ENCODE measurements at regions of chr14 and their contacts with region 1.

Region 1: GRCh38 chr14:32076278-32077080 is 625 bp upstream of the ARHGAP5 start:
- DNase-seq: peak; percentile 90
- H3K4me3 Mint-ChIP-seq: peak overlapping the region; percentile 94
- H3K27ac Mint-ChIP-seq: peak overlapping the region; percentile 85
- H3K4me1 Mint-ChIP-seq: peaks cover 26% of the 10 kb centered on the region
- H3K27me3 Mint-ChIP-seq: peaks cover 2% of the 10 kb centered on the region

Region 2: GRCh38 chr14:30558675-30559555 is 1517.6 kb before region 1 on chr14 and contains the start of gene G2E3:
- CTCF ChIA-PET with region 1: no interaction called
- POLR2A ChIA-PET with region 1: no interaction called
- intact Hi-C with region 1: loop called (anchors 5 kb)
- DNase-seq: peak; percentile 93
- H3K4me3 Mint-ChIP-seq: peak within 1 kb of the TSS; percentile 100
- H3K27ac Mint-ChIP-seq: peak within 1 kb of the TSS; percentile 99
- H3K4me1 Mint-ChIP-seq: peaks cover 29% of the 10 kb centered on the region
- H3K27me3 Mint-ChIP-seq: peaks cover 3% of the 10 kb centered on the region
- total RNA-seq, gene G2E3: 25.3 to 31.2 TPM

Region 3: GRCh38 chr14:31207755-31208545 is 868.5 kb before region 1 on chr14 and contains the start of gene HECTD1:
- CTCF ChIA-PET with region 1: interaction called, 3 read pairs
- POLR2A ChIA-PET with region 1: interaction called, 5 read pairs
- intact Hi-C with region 1: loop called (anchors 5 kb)
- DNase-seq: peak; percentile 91
- H3K4me3 Mint-ChIP-seq: peak within 1 kb of the TSS; percentile 94
- H3K27ac Mint-ChIP-seq: peak within 1 kb of the TSS; percentile 100
- H3K4me1 Mint-ChIP-seq: peaks cover 48% of the 10 kb centered on the region
- H3K27me3 Mint-ChIP-seq: no peaks in the 10 kb centered on the region
- total RNA-seq, gene HECTD1: 84.9 to 88.1 TPM

Region 4: GRCh38 chr14:31561155-31561846 is 515.2 kb before region 1 on chr14 and contains the start of gene NUBPL:
- CTCF ChIA-PET with region 1: interaction called, 3 read pairs
- POLR2A ChIA-PET with region 1: no interaction called
- intact Hi-C with region 1: loop called (anchors 5 kb)
- DNase-seq: peak; percentile 98
- H3K4me3 Mint-ChIP-seq: peak within 1 kb of the TSS; percentile 95
- H3K27ac Mint-ChIP-seq: peak within 1 kb of the TSS; percentile 93
- H3K4me1 Mint-ChIP-seq: peaks cover 20% of the 10 kb centered on the region
- H3K27me3 Mint-ChIP-seq: peaks cover 1% of the 10 kb centered on the region
- total RNA-seq, gene NUBPL: 6.9 to 9.1 TPM

Region 5: DNA sequence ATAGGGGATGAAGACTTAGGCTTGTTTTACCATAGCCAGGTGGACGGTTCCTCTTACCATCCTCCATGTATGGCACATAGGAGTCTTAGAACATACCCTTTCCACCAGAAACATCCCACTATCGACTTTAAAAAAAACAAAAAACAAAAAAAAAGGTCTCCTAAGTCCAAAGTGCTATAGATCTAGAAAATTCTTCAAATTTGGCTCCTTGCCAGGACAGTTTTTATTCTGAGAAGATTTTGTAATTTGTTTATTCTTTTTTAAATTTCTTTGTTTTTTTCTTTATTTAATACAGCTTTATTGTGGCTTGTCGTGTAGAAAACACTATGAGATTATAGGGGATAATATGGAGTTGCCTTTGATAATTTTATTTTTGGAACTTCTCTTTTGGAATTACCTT is 317.5 kb before region 1 on chr14:
- CTCF ChIA-PET with region 1: no interaction called
- POLR2A ChIA-PET with region 1: no interaction called
- intact Hi-C with region 1: no loop called
- DNase-seq: no peak
- H3K4me3 Mint-ChIP-seq: no peak overlapping the region
- H3K27ac Mint-ChIP-seq: no peak overlapping the region
- H3K4me1 Mint-ChIP-seq: no peaks in the 10 kb centered on the region
- H3K27me3 Mint-ChIP-seq: no peaks in the 10 kb centered on the region

Region 6: GRCh38 chr14:31950764-31951637 is 125.5 kb before region 1 on chr14:
- CTCF ChIA-PET with region 1: no interaction called
- POLR2A ChIA-PET with region 1: no interaction called
- intact Hi-C with region 1: no loop called
- DNase-seq: no peak
- H3K4me3 Mint-ChIP-seq: no peak overlapping the region
- H3K27ac Mint-ChIP-seq: no peak overlapping the region
- H3K4me1 Mint-ChIP-seq: peaks cover 40% of the 10 kb centered on the region
- H3K27me3 Mint-ChIP-seq: no peaks in the 10 kb centered on the region

Region 7: GRCh38 chr14:32087173-32087861 is 10.8 kb after region 1 on chr14:
- CTCF ChIA-PET with region 1: no interaction called
- POLR2A ChIA-PET with region 1: no interaction called
- intact Hi-C with region 1: loop called (anchors 1 kb)
- DNase-seq: no peak
- H3K4me3 Mint-ChIP-seq: no peak overlapping the region
- H3K27ac Mint-ChIP-seq: no peak overlapping the region
- H3K4me1 Mint-ChIP-seq: peaks cover 43% of the 10 kb centered on the region
- H3K27me3 Mint-ChIP-seq: no peaks in the 10 kb centered on the region

Region 8: DNA sequence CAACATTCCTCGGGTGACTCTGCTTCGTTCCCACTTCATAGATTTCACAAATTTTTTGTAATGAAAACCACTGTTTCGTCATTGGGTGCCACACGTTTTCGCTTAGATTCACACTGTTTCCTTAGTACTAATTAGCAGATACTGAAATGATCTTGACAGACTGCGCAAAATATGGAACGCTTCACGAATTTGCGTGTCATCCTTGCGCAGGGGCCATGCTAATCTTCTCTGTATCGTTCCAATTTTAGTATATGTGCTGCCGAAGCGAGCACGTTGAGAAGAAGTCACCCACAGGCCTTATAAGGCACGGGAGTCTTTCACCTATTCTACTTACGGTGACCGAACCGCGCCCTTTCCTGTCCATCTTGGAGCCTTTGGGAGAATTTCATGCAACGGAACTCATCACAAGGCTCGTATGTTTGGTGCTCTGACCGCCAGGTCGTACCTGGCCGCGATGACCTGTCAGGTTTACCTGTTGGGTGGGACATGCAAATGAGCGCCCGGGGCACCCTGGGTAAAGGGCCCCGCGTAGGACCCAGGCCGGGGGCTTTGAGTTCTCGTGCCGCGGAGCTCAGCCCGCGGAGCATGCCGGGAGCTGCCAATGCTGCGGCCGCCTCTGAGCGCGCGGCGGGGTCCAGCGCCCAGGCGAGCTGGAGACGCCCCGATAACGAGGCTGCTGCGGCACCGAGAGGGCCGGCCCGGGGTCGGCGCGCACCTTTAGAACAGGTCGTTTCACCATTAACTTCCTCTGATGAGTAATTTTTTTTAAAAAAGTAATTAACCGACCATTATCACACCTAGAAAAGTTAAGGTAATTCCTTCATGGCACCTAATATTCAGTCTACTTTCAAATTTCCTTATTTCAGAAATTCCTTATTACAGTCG is 126.8 kb after region 1 on chr14 and contains the start of gene RNU6-8:
- CTCF ChIA-PET with region 1: interaction called, 7 read pairs
- POLR2A ChIA-PET with region 1: interaction called, 15 read pairs
- intact Hi-C with region 1: loop called (anchors 1 kb)
- DNase-seq: peak; percentile 89
- H3K4me3 Mint-ChIP-seq: peak within 1 kb of the TSS; percentile 89
- H3K27ac Mint-ChIP-seq: peak within 1 kb of the TSS; percentile 98
- H3K4me1 Mint-ChIP-seq: peaks cover 46% of the 10 kb centered on the region
- H3K27me3 Mint-ChIP-seq: peaks cover 2% of the 10 kb centered on the region
- total RNA-seq, gene RNU6-8: not detected

Region 9: GRCh38 chr14:32469388-32470160 is 393.1 kb after region 1 on chr14:
- CTCF ChIA-PET with region 1: no interaction called
- POLR2A ChIA-PET with region 1: no interaction called
- intact Hi-C with region 1: loop called (anchors 2 kb)
- DNase-seq: no peak
- H3K4me3 Mint-ChIP-seq: no peak overlapping the region
- H3K27ac Mint-ChIP-seq: no peak overlapping the region
- H3K4me1 Mint-ChIP-seq: no peaks in the 10 kb centered on the region
- H3K27me3 Mint-ChIP-seq: no peaks in the 10 kb centered on the region

Measured in activated CD4-positive, alpha-beta memory T cell treated with anti-CD3 and anti-CD28 coated beads for 36 hours (primary cell).